ENCODE measurements at regions of chr7 and their contacts with region 1.

Region 1: GRCh38 chr7:154927624-154928143 is 75.2 kb downstream of the PAXIP1 start:
- DNase-seq: peak; percentile 53
- H3K4me3 Mint-ChIP-seq: peak overlapping the region; percentile 94
- H3K27ac Mint-ChIP-seq: peak overlapping the region; percentile 93
- H3K4me1 Mint-ChIP-seq: peaks cover 25% of the 10 kb centered on the region
- H3K27me3 Mint-ChIP-seq: peaks cover 27% of the 10 kb centered on the region

Region 2: GRCh38 chr7:154906736-154907355 is 20.8 kb before region 1 on chr7:
- intact Hi-C with region 1: no loop called
- DNase-seq: no peak
- H3K4me3 Mint-ChIP-seq: no peak overlapping the region
- H3K27ac Mint-ChIP-seq: no peak overlapping the region
- H3K4me1 Mint-ChIP-seq: no peaks in the 10 kb centered on the region
- H3K27me3 Mint-ChIP-seq: peaks cover 3% of the 10 kb centered on the region

Region 3: DNA sequence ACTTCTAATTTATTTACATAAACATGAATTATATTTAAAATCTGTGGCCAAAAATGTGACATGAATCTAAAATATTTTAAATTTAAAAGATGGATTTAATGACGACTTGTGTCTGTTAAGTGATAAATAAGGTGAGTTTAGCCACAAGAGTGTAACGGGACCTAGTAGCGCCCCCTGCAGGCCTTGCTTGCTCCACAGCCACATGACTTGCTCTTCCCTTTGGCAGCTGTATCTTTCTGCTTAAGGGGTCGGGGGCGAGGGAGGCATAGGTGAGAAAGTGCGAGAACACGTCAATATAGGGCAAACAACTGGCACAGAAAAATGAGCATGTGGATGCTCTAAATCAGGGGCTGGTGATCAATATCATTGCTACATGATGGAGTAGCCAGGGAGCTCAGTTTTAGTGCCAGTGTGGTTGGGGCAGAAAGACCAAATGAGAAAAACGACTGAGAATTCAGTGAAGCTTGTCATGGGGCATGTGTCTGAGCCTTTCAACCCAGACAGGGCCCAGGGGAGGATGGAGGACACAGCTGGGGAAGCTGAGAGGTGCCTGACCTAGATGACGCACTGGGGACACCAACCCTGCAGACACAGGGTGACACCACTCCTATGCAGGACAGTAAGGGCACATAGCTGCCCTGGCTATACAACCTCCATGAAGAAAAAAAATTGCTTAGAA is 25.5 kb after region 1 on chr7:
- intact Hi-C with region 1: loop called (anchors 1 kb)
- DNase-seq: no peak
- H3K4me3 Mint-ChIP-seq: no peak overlapping the region
- H3K27ac Mint-ChIP-seq: no peak overlapping the region
- H3K4me1 Mint-ChIP-seq: no peaks in the 10 kb centered on the region
- H3K27me3 Mint-ChIP-seq: no peaks in the 10 kb centered on the region

Region 4: GRCh38 chr7:155069992-155070751 is 142.5 kb after region 1 on chr7 and contains the start of gene HTR5A:
- intact Hi-C with region 1: loop called (anchors 1 kb)
- DNase-seq: peak; percentile 75
- H3K4me3 Mint-ChIP-seq: no peak within 1 kb of the TSS
- H3K27ac Mint-ChIP-seq: no peak within 1 kb of the TSS
- H3K4me1 Mint-ChIP-seq: no peaks in the 10 kb centered on the region
- H3K27me3 Mint-ChIP-seq: peaks cover 14% of the 10 kb centered on the region
- total RNA-seq, gene HTR5A: not detected in 2 replicates

Region 5: DNA sequence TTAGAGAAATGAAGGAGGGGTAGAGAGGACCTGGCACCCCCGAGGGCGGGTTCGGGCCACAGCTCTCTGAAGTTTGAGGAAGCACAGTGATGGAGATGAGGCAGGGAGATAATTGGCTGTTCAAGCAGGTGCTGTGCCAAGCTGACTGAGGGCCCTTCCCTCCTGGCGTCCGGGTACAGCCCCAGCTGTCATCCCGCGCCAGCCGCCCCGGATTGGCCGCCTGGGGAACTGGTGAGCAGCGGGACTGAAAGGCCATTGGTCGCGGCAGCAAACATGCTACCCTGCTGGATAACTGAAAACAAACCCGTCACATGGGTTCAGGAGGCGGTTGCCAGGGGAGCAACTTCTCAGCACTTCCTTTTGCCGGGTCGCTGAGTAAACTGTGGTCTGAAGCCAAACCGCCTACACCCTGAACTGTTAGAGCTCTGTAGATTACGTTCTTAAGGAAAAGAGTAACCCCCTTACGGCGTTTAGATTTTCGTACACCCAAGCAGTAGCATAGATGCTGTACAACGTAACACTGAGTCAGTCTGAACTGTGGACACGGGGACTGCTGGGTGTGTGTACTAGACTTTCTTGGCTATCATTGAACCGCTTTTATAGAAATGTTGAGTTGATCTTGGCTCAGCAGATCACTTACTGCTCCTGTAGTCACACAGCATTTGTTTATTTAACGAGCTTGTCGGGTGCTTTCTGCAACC is 371.3 kb after region 1 on chr7:
- intact Hi-C with region 1: loop called (anchors 1 kb)
- DNase-seq: peak; percentile 96
- H3K4me3 Mint-ChIP-seq: peak overlapping the region; percentile 91
- H3K27ac Mint-ChIP-seq: peak overlapping the region; percentile 97
- H3K4me1 Mint-ChIP-seq: peaks cover 46% of the 10 kb centered on the region
- H3K27me3 Mint-ChIP-seq: no peaks in the 10 kb centered on the region

Region 6: DNA sequence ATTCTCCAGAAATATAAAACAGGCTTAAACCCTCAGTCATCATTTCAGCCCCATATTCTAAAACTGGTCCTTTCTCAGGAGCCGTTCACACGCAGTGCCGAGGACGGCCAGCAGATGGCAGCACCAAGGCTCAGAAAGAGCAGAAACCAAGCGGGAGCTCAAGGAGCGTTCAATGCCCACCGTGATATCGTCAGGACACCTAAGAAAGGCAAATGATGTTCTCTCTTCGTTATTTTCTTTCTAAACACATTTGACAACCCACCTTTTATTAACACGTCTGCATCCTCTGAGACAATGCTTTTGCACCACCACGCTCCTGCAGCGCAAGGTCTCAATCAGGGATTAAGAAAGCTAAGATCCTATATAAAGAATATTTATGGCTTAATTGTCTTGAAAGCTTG is 671.1 kb after region 1 on chr7:
- intact Hi-C with region 1: loop called (anchors 5 kb)
- DNase-seq: peak; percentile 69
- H3K4me3 Mint-ChIP-seq: no peak overlapping the region
- H3K27ac Mint-ChIP-seq: no peak overlapping the region
- H3K4me1 Mint-ChIP-seq: peaks cover 10% of the 10 kb centered on the region
- H3K27me3 Mint-ChIP-seq: peaks cover 29% of the 10 kb centered on the region

Region 7: DNA sequence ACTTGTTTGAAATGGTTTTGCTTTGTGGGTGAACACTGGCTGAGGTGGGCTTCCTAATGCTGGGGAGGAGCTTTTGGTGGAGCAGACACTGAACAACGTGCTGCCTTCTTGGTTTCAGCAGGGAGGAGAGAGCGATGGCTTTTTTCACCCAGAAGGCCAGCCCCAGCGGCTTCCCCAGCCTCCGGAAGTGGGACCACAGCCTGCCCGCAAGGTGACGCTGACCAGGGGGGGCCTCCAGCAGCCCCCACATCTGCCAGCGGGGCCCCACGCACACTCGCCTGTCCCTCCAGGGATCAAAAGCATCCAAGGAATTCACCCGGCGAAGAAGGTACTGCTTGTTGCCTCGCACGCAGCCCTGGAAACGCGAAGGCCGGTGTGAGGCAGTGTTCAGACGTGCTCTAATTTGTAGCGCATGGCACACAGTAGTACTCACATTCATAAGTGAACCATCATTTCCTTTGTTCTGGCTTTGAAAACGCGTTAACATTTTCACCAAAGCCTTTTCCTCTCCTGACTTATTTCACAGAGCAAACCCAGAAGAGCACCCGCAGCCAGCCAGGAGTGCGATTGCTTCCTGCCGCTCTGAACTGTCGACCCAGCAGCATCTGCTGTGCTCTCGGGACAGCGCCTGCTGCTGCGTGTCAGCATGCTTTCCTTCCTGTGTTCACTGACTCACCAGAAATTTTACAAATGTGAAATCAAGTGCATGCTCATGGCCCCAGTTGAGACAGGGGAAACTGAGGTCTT is 836.2 kb after region 1 on chr7:
- intact Hi-C with region 1: loop called (anchors 1 kb)
- DNase-seq: peak; percentile 65
- H3K4me3 Mint-ChIP-seq: peak overlapping the region; percentile 85
- H3K27ac Mint-ChIP-seq: peak overlapping the region; percentile 100
- H3K4me1 Mint-ChIP-seq: peaks cover 66% of the 10 kb centered on the region
- H3K27me3 Mint-ChIP-seq: no peaks in the 10 kb centered on the region

Measured in activated T-helper 1 cell treated with anti-CD3 and anti-CD28 coated beads, Interleukin-12 subunit alpha, Interleukin-12 subunit beta, Interleukin-2, Interleukin-4 antibody, amounts not matched to agents 30 ng/mL and 10 ng/mL and 1 ng/mL, durations not matched to agents 14 hours and 24 hours and 36 hours (primary cell).